A549 (cell line): ENCODE measurements at regions of chr9 and their contacts with region 1.

Region 1: GRCh38 chr9:134689321-134690181 is 47.9 kb downstream of the COL5A1 start:
- DNase-seq: peak; percentile 59 to 82
- ATAC-seq: peak; percentile 89 to 98
- H3K4me3 ChIP-seq: no peak overlapping the region
- H3K27ac ChIP-seq: peak overlapping the region; percentile 17 to 64; a peak in 3 of 6 replicates
- H3K4me1 ChIP-seq: peaks cover 10% of the 10 kb centered on the region
- CTCF ChIP-seq: peak; percentile 59
- EP300 ChIP-seq: no peak
- POLR2A ChIP-seq: no peak
- RAD21 ChIP-seq: peak; percentile 42 to 44

Region 2: DNA sequence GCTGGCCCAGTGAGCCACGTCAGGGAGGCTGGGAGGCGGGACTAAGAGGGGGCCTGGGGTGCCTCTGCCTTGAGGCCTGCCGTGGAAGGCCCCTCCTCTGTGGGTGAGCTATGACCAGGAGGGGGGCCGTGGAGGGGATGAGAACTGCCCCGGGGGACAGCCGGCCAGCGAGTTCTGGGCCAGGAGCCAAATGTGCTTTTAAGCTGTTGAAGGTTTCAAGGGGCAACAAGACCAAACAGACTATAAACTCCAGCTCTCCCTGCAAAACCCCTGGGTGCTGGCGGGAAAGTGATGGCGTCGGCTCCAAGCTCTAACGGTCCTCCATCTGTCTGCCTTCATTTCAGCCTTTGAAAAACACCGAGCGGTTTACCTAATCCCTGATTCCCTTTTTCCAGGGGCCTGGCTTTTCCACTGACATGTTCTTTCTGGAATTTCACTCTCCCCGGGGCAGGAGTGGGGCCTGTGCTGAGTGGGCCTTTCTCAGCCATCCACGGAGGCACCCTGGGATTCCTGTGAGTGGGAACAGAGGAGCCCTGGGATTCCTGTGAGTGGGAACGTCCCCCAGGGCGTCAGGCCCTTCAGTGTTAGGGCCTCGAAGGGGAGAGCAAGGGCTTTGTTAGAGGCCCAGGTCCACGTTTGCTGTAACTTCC is 17.6 kb after region 1 on chr9:
- CTCF ChIA-PET with region 1: interaction called, 24 read pairs
- POLR2A ChIA-PET with region 1: no interaction called
- DNase-seq: no peak
- ATAC-seq: peak in 1 of 2 experiments; percentile 18; a peak in 1 of 6 replicates
- H3K4me3 ChIP-seq: no peak overlapping the region
- H3K27ac ChIP-seq: peak overlapping the region in 1 of 2 experiments; percentile 47; a peak in 2 of 6 replicates
- H3K4me1 ChIP-seq: peaks cover 4% of the 10 kb centered on the region; the same call in 1 of the 3 replicates
- CTCF ChIP-seq: no peak
- EP300 ChIP-seq: no peak
- POLR2A ChIP-seq: no peak
- RAD21 ChIP-seq: no peak